KBM-7 (cell line): ENCODE measurements at regions of chr16 and their contacts with region 1.

Region 1: DNA sequence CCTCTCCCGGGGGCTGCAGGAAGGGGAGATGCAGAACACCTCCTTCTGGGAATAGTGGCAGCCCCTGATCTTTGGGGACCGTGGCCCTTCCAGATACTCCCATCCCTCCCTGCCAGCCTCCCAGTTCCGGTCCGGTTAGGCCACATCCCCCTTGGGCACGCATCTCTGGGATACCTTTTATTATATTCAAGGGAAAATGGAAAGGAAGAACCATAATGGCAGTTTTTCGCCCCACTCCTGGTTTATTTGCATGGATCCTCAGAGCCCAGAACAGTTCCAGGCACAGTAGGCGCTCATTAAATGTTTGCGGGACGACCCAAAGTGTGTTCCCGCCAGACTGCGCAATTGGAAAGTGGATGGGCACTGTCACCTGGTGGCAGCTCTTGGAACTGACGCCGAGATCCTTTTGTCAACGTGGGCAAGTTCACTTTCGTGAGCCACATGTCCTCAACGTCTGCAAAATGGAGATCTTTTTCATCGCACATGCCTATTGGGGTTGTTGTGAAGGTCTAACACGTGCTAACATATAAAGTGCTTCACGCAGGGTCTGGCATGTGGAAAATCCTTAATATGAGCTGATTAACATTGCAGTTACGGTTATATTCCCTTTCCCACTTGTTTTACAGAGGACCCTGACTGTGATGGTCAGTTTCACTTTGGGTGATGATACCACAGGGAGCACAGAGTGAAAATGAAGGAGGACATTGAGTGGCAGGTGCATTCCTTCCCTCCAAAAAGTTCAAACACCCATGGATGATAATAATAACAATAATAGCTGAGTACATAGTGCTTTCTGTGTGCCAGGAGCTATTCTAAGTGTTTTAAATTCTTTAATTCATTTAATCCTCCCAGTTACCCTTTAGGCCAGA is 1.7 kb upstream of the GPRC5B start:
- DNase-seq: peak; percentile 93

Region 2: GRCh38 chr16:19595043-19595767 is 291.1 kb before region 1 on chr16:
- in situ Hi-C with region 1: loop called (anchors 10 kb)
- DNase-seq: no peak